ENCODE measurements at regions of chr7 and their contacts with region 1.

Region 1: DNA sequence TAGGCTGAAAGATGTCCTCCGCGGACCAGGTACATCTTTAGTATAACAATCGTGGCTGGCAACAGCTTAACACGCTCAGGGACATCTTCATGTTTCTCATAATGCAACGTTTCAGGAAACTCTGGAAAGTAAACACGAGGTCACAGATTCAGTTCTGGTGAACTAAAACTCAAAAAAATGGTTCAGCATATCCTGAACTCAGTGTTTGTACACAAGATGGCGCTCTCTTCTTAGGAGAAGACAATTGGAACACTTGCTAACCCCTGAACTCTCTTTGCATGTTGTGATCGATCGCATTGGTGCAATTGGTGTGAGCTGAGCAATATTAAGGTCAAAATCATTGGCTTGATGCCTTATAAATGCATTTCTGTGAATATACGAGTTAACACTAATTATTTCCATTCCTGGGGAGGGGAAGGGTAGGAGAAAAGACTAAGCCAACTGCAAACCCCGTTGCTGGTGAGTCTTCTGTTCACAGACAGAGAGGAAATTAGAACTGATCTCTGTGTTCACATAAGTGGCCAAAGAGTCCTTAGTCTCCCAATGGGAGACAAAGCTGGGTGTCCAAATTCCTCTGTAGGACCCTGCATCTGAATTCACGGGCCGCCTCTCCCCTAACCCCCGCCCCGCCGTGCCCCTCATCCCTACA is 52.6 kb upstream of the FAM180A start:
- DNase-seq: peak; percentile 65
- ATAC-seq: peak; percentile 92
- H3K4me3 ChIP-seq: no peak overlapping the region
- H3K27ac ChIP-seq: no peak overlapping the region
- H3K4me1 ChIP-seq: no peaks in the 10 kb centered on the region
- H3K27me3 ChIP-seq: peaks cover 0 to 3% of the 10 kb centered on the region in 2 experiments; a peak in 2 of 5 replicates
- CTCF ChIP-seq: peak; percentile 90
- EP300 ChIP-seq: no peak
- POLR2A ChIP-seq: no peak
- RAD21 ChIP-seq: peak; percentile 74; the same call in 1 of the 2 replicates

Region 2: GRCh38 chr7:135147899-135148721 is 653.1 kb before region 1 on chr7 and contains the start of gene TMEM140:
- CTCF ChIA-PET with region 1: no interaction called
- POLR2A ChIA-PET with region 1: no interaction called
- in situ Hi-C with region 1: no loop called
- intact Hi-C with region 1: no loop called
- DNase-seq: peak; percentile 94
- ATAC-seq: peak; percentile 96
- H3K4me3 ChIP-seq: peak within 1 kb of the TSS; percentile 58 to 71 (median 67)
- H3K27ac ChIP-seq: peak within 1 kb of the TSS; percentile 84
- H3K4me1 ChIP-seq: peaks cover 69% of the 10 kb centered on the region
- H3K27me3 ChIP-seq: no peaks in the 10 kb centered on the region; a peak in 1 of 5 replicates
- CTCF ChIP-seq: no peak; the same call in 1 of the 2 replicates
- EP300 ChIP-seq: peak in 1 of 2 experiments; percentile 72; a peak in 2 of 4 replicates
- POLR2A ChIP-seq: peak; percentile 62 to 66; a peak in 3 of 4 replicates
- RAD21 ChIP-seq: no peak
- total RNA-seq, gene TMEM140: 5.6 and 9.2 TPM in 2 replicates

Region 3: DNA sequence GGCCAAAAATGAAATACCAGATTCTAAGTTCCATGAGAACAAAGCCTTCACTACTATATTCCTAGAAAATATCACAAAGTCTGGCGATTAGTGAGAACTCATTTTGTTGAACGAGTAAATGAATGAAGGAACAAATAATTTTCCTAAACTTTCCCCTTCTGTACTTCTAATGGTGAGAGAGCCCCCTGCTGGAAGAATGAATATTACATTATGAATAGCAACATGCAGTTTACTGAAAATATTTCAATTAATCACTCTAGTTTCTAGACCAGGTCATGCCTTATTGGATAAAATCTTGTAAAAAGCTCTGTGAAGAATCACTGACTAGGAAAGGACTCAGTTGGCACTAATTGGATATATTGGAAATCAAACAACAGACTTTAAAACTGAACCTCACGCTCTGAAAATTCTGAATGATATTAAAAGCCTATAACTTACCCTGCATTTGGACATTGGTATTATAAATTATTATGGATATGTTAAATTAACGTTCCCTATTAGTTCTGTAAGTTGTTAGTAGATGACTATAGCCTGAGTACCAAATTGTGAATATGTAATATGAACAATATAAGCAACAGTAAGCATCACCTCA is 208.4 kb after region 1 on chr7:
- CTCF ChIA-PET with region 1: interaction called, 51 read pairs
- POLR2A ChIA-PET with region 1: no interaction called
- in situ Hi-C with region 1: loop called (anchors 5 kb)
- intact Hi-C with region 1: loop called (anchors 1 kb)
- DNase-seq: peak; percentile 16
- ATAC-seq: no peak
- H3K4me3 ChIP-seq: no peak overlapping the region
- H3K27ac ChIP-seq: no peak overlapping the region
- H3K4me1 ChIP-seq: no peaks in the 10 kb centered on the region
- H3K27me3 ChIP-seq: no peaks in the 10 kb centered on the region
- CTCF ChIP-seq: peak; percentile 63
- EP300 ChIP-seq: no peak
- POLR2A ChIP-seq: no peak
- RAD21 ChIP-seq: peak; percentile 38; the same call in 1 of the 2 replicates

Region 4: GRCh38 chr7:136687693-136688322 is 886.6 kb after region 1 on chr7:
- CTCF ChIA-PET with region 1: no interaction called
- POLR2A ChIA-PET with region 1: no interaction called
- in situ Hi-C with region 1: no loop called
- intact Hi-C with region 1: loop called (anchors 5 kb)
- DNase-seq: peak; percentile 7
- ATAC-seq: no peak
- H3K4me3 ChIP-seq: no peak overlapping the region
- H3K27ac ChIP-seq: no peak overlapping the region
- H3K4me1 ChIP-seq: no peaks in the 10 kb centered on the region
- H3K27me3 ChIP-seq: no peaks in the 10 kb centered on the region
- CTCF ChIP-seq: no peak
- EP300 ChIP-seq: no peak
- POLR2A ChIP-seq: no peak
- RAD21 ChIP-seq: no peak

Measured in HepG2 (cell line).